ENCODE measurements at regions of chr5 and their contacts with region 1.

Region 1: GRCh38 chr5:151223469-151224264 is at the start of gene CCDC69:
- DNase-seq: peak; percentile 59
- H3K4me3 Mint-ChIP-seq: peak within 1 kb of the TSS; percentile 85
- H3K27ac Mint-ChIP-seq: peak within 1 kb of the TSS; percentile 93
- H3K4me1 Mint-ChIP-seq: peaks cover 56% of the 10 kb centered on the region
- H3K27me3 Mint-ChIP-seq: no peaks in the 10 kb centered on the region
- total RNA-seq, gene CCDC69: 15.5 to 18.5 TPM

Region 2: GRCh38 chr5:151196556-151197290 is 26.9 kb before region 1 on chr5:
- CTCF ChIA-PET with region 1: interaction called, 3 read pairs
- intact Hi-C with region 1: loop called (anchors 2 kb)
- DNase-seq: peak; percentile 40
- H3K4me3 Mint-ChIP-seq: no peak overlapping the region
- H3K27ac Mint-ChIP-seq: peak overlapping the region; percentile 44
- H3K4me1 Mint-ChIP-seq: peaks cover 48% of the 10 kb centered on the region
- H3K27me3 Mint-ChIP-seq: no peaks in the 10 kb centered on the region

Region 3: DNA sequence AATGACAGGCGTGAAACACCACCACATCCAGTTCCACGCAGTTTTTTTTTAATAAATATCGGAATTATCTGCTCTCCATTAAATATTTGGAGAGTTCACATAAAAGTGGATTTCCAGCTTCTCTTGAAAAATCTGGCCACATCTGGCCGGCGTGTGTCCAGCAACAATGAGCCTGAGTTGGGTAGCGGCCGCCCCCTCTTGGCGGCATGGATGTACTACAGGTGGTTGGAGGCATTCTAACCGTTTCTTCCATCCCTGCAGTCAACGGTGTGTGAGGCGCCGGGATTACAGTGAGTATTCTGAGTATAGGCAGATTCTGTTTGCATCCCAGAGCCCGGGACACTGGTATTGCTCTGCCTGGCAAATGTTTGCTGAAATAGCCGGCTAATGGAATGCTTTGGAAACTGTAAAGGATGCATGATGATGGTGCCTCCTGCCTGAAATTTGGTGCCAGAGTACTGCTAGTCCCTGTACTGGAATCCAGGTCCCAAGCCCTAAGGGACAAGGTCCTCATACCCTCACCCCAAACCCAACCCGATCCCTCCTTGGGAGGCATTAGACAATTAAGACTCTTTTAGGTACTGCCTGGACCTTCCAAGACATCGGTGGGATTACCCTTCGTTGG is 15.7 kb after region 1 on chr5:
- CTCF ChIA-PET with region 1: interaction called, 39 read pairs
- intact Hi-C with region 1: loop called (anchors 1 kb)
- DNase-seq: peak; percentile 64
- H3K4me3 Mint-ChIP-seq: no peak overlapping the region
- H3K27ac Mint-ChIP-seq: no peak overlapping the region
- H3K4me1 Mint-ChIP-seq: peaks cover 18% of the 10 kb centered on the region
- H3K27me3 Mint-ChIP-seq: no peaks in the 10 kb centered on the region

Measured in activated naive CD4-positive, alpha-beta T cell treated with anti-CD3 and anti-CD28 coated beads for 36 hours (primary cell).